ENCODE measurements at regions of chr12 and their contacts with region 1.

Region 1: DNA sequence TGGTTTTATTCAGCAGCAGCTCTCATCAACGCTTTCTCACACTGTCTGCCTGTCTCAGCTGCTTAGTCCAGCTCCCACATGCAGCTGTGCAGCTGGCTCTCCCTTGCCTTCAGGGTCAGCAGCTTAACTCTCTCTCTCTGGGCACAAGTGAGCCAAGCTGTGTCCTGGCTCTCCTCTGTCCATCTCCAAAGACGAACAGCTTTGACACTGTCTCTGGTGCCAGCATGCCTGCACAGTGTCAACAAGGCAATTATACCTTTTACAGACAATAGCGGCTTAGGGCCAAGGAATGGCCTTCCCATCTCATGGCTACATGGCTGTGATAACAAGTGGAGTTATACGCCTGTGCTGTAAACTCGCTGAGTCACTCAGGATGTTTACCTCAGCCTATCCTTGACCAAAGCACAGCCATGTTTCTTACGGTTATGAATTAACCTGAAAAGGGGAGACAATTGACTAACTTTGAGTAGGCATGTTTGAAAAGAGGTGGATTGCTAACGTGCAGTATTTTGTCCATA is 38.4 kb upstream of the MANSC4 start:
- DNase-seq: peak in 1 of 2 donors; percentile 14
- H3K4me3 ChIP-seq: no peak overlapping the region
- H3K27ac ChIP-seq: peak overlapping the region in 2 of 5 donors; percentile 23 to 48
- H3K4me1 ChIP-seq: peaks cover 4 to 14% (median 9%) of the 10 kb centered on the region in 4 donors
- H3K27me3 ChIP-seq: no peaks in the 10 kb centered on the region
- CTCF ChIP-seq: no peak
- EP300 ChIP-seq: no peak
- POLR2A ChIP-seq: no peak

Region 2: DNA sequence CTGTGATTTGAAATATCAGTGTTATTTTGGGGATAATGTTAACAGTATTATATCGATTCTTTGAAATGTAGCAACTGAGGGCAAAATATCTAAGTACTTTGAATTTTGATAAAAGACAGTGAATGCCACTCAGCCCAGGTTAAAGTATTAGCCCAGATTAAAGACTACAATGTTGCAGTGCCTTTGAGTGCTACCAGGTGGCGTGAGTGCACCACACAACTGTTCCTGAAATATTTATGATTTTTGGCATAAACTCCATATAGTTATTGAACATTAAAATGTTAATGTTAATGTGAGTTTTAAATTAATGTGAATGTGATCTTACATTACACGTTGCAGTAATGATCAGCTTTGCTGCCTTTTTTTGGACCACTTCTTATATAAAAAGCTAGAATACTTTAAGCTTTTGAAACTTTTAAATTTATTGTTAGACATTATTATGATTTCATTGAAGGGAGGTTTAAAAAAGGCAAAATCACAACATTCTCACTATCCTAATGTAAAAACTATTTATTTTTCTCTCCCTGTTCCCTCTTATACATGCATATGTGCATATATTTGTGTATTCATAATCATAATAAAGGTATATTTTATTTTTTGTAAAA is 85.3 kb before region 1 on chr12:
- intact Hi-C with region 1: loop called (anchors 10 kb)
- DNase-seq: peak in 1 of 2 donors; percentile 61
- H3K4me3 ChIP-seq: no peak overlapping the region
- H3K27ac ChIP-seq: no peak overlapping the region
- H3K4me1 ChIP-seq: no peaks in the 10 kb centered on the region
- H3K27me3 ChIP-seq: no peaks in the 10 kb centered on the region
- CTCF ChIP-seq: peak in 5 of 7 experiments; percentile 58 to 76 (median 65)
- EP300 ChIP-seq: no peak
- POLR2A ChIP-seq: no peak

Region 3: DNA sequence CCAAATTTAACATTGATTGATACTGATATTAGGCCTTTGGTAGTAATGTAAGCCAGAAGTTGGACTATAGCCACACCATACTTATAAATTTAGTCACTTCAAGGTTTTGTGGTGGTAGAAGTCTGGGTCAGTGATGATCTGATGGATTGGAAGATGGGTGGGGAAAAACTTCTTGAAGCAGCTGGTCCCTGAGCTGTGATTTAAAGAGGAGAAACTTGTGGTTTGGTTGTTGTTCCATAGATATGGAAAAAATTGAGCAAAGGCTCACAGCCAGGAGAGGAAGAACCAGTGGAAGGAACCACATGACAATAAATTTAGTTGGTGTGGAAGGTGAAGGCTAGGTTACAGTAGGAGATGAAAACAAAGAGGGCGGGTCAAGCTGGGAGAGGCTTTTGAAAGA is 128.0 kb after region 1 on chr12:
- intact Hi-C with region 1: no loop called
- DNase-seq: no peak
- H3K4me3 ChIP-seq: no peak overlapping the region
- H3K27ac ChIP-seq: no peak overlapping the region
- H3K4me1 ChIP-seq: no peaks in the 10 kb centered on the region
- H3K27me3 ChIP-seq: no peaks in the 10 kb centered on the region
- CTCF ChIP-seq: no peak
- EP300 ChIP-seq: no peak
- POLR2A ChIP-seq: no peak

Region 4: DNA sequence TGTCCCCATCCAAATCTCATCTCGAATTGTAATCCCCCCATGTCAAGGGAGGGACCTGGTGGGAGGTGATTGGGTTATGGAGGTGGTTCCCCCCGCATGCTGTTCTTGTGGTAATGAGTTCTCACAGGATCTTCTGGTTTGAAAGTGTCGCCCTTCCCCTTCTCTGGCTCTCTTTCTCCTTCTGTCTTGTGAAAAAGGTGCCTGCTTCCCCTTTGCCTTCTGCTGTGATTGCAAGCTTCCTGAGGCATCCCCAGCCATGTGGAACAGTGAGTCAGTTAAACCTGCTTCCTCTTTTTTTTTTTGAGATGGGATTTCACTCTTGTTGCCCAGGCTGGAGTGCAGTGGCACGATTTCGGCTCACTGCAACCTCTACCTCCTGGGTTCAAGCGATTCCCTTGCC is 475.8 kb after region 1 on chr12:
- intact Hi-C with region 1: no loop called
- DNase-seq: no peak
- H3K4me3 ChIP-seq: no peak overlapping the region
- H3K27ac ChIP-seq: no peak overlapping the region
- H3K4me1 ChIP-seq: no peaks in the 10 kb centered on the region
- H3K27me3 ChIP-seq: no peaks in the 10 kb centered on the region
- CTCF ChIP-seq: no peak
- EP300 ChIP-seq: no peak
- POLR2A ChIP-seq: no peak

Measured in stomach (tissue), 19 donors.